K562 (cell line): ENCODE measurements at regions of chr4 and their contacts with region 1.

Region 1: DNA sequence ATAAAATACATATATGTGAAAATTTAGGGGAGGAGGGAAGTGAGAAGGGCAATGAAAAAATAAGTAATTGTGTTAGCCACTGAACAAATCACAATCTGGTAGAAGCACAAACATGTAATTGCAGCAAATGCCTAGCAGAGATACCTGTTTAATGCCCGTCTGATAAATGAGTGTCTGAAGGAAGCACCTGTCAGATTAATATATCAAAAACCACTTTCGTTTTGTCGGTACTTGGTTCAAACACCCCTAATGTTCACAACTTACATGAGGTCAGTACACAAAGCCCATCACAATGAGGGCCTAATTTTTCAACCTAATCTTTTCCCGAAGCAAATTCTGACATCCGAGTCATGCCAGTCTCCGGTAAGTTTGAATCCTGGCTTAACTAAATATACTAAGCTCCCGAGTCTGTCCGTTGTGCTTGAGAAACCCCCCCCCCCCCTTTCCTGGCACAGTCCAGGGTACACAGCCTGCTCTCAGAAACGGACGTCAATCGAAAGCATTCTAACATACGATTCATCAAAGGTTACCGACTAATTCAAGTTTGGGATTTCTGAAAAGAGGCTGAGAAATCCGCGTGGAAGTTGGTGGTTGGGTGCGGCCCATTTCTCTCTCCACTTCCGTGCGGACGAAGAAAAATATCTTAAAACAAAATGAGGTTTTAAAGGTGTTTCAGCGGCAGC is 758 bp downstream of the SDAD1 start:
- DNase-seq: peak in 2 of 4 experiments; percentile 21 to 27
- ATAC-seq: peak; percentile 14
- H3K4me3 ChIP-seq: peak overlapping the region; percentile 88
- H3K27ac ChIP-seq: peak overlapping the region; percentile 68
- H3K4me1 ChIP-seq: peaks cover 2 to 3% of the 10 kb centered on the region in 2 experiments; a peak in 2 of 5 replicates
- H3K27me3 ChIP-seq: no peaks in the 10 kb centered on the region
- CTCF ChIP-seq: no peak
- EP300 ChIP-seq: no peak
- POLR2A ChIP-seq: no peak
- RAD21 ChIP-seq: no peak

Region 2: DNA sequence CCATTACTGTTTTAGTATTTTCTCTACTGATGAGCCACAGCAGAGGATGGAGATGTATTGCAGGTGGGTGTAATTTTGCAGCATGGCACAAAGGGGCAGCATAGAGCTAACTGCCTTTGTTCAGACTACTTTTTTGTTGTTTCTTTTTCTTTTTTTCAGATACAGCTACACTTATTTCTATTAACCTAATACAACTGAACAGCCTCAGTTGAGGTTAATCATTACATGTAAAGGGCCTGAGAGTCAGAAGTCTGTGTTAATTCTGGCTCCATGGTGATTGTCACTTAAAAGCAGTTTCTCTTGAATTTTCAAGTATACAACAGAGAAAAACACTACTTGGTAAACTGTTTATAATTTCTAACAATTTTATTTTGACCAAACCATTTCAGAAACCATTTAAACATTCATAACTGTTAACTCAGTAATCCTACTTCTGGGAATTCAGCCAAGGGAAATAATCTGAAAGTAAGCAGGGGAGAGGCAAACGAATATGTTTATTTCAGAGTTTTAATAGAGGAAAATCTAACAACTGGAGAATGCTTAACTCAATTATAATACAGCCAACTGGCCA is 73.8 kb before region 1 on chr4:
- CTCF ChIA-PET with region 1: no interaction called
- POLR2A ChIA-PET with region 1: no interaction called
- in situ Hi-C with region 1: no loop called
- intact Hi-C with region 1: loop called (anchors 5 kb)
- DNase-seq: peak; percentile 40 to 55 (median 46)
- ATAC-seq: peak; percentile 92
- H3K4me3 ChIP-seq: no peak overlapping the region
- H3K27ac ChIP-seq: no peak overlapping the region
- H3K4me1 ChIP-seq: no peaks in the 10 kb centered on the region
- H3K27me3 ChIP-seq: no peaks in the 10 kb centered on the region
- CTCF ChIP-seq: peak; percentile 71 to 85 (median 79)
- EP300 ChIP-seq: no peak
- POLR2A ChIP-seq: no peak
- RAD21 ChIP-seq: peak; percentile 54 to 76

Region 3: DNA sequence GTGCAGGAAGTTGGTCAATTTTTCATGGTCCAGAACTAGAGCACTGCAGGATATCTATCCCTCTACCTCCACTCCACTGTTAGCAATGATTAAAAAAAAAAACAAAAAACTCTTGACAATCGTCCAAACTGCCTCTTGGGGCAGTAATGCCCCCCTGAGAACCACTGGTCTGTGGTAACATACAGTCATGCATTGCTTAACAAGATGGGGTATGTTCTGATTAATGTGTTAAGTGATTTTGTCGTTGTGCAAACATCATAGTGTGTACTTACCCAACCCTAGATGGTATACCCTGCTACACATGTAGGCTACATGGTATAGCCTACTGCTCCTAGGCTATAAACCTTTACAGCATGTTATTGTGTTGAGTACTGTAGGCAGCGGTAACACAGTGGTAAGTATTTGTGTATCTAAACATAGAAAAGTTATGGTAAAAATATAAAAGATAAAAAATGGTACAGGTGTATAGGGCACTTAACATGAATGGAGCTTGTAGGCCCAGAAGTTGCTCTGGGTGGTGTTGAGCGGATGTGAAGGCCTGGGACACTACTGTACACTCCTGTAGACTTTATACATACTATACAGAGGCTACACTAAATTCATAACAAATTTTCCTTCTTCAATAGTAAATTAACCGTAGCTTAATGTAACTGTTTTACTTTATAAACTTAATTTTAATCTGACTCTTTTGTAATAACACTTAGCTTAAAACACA is 118.6 kb after region 1 on chr4:
- CTCF ChIA-PET with region 1: no interaction called
- POLR2A ChIA-PET with region 1: no interaction called
- in situ Hi-C with region 1: no loop called
- intact Hi-C with region 1: no loop called
- DNase-seq: peak in 2 of 4 experiments; percentile 23 to 34
- ATAC-seq: peak; percentile 73
- H3K4me3 ChIP-seq: no peak overlapping the region
- H3K27ac ChIP-seq: no peak overlapping the region
- H3K4me1 ChIP-seq: peaks cover 0 to 3% of the 10 kb centered on the region in 2 experiments; a peak in 1 of 5 replicates
- H3K27me3 ChIP-seq: no peaks in the 10 kb centered on the region
- CTCF ChIP-seq: peak; percentile 24 to 31 (median 31); a peak in 1 of 6 replicates
- EP300 ChIP-seq: no peak
- POLR2A ChIP-seq: no peak
- RAD21 ChIP-seq: no peak

Region 4: DNA sequence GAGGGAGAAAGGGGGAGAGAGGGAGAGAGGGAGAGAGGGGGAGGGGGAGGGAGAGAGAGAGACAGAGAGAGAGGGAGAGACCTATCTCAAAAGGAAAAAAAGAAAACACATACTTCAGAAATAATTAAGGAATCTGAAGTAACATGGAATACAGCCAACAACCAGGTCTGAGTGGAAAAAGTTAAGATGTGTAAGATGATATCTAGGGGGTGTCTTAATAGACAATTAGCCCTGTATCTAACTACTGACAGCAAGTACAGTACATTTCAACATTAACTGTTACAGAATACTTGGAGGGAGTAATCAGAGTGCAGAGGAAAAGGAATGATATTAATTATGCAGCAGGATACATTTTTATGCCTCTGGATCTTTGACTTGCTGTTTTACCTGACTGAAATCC is 135.8 kb after region 1 on chr4:
- CTCF ChIA-PET with region 1: no interaction called
- POLR2A ChIA-PET with region 1: no interaction called
- in situ Hi-C with region 1: no loop called
- intact Hi-C with region 1: no loop called
- DNase-seq: no peak
- ATAC-seq: no peak
- H3K4me3 ChIP-seq: no peak overlapping the region
- H3K27ac ChIP-seq: no peak overlapping the region
- H3K4me1 ChIP-seq: no peaks in the 10 kb centered on the region
- H3K27me3 ChIP-seq: no peaks in the 10 kb centered on the region
- CTCF ChIP-seq: no peak
- EP300 ChIP-seq: no peak
- POLR2A ChIP-seq: no peak
- RAD21 ChIP-seq: no peak